Dendritic cell treated with granulocyte-macrophage colony-stimulating factor and Interleukin-4, amounts not matched to agents 40 ng/mL and 50 ng/mL, for 4 days (primary cell): ENCODE measurements at regions of chr6 and their contacts with region 1.

Region 1: GRCh38 chr6:4055420-4056041 is 23.4 kb downstream of the FAM217A start:
- H3K4me3 Mint-ChIP-seq: no peak overlapping the region
- H3K27ac Mint-ChIP-seq: no peak overlapping the region
- H3K4me1 Mint-ChIP-seq: no peaks in the 10 kb centered on the region
- H3K27me3 Mint-ChIP-seq: no peaks in the 10 kb centered on the region

Region 2: DNA sequence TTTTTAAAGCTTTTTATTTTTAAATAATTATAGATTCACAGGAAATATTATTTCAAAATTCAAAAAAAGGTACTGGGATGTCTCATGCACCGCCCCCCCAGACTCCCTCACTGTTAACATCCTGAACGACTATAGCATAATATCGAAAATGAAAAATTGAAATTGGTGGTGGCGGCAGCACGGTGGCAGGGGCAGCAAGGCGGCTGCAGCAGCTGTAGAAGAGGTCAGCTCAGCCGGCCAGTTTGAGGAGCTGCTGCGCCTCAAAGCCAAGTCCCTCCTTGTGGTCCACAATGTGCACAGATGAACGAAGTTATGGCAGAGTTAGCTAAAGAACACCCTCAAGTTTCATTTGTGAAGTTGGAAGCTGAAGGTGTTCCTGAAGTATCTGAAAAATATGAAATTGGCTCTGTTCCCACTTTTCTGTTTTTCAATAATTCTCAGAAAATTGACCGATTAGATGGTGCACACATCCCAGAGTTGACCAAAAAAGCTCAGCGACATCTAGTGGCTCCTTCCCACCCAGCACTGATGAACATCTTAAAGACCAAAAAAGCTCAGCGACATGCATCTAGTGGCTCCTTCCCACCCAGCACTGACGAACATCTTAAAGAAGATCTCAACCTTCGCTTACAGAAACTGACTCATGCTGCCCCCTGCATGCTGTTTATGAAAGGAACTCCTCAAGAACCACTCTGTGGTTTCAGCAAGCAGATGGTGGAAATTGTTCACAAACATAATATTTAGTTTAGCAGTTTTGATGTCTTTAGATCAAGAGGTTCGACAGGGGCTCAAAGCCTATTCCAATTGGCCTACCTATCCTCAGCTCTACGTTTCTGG is 77.4 kb before region 1 on chr6:
- intact Hi-C with region 1: no loop called
- H3K4me3 Mint-ChIP-seq: no peak overlapping the region
- H3K27ac Mint-ChIP-seq: no peak overlapping the region
- H3K4me1 Mint-ChIP-seq: no peaks in the 10 kb centered on the region
- H3K27me3 Mint-ChIP-seq: peaks cover 6% of the 10 kb centered on the region

Region 3: DNA sequence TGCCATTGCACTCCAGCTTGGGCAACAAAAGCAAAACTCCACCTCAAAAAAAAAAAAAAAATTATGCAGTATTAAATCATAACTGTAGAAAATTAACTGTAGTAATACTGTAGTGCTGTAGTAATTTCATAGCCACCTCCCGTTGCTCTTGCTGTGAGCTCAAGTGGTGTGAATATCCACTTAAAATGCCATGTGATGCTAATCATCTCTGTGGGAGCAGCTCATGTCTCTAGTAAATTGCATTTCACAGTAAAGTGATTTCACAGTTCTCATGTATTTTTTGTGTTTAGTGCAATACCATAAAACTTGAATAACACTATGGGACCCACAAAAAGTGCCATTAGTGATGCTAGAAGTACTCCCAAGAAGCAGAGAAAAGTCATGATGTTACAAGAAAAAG is 37.8 kb after region 1 on chr6:
- intact Hi-C with region 1: no loop called
- H3K4me3 Mint-ChIP-seq: no peak overlapping the region
- H3K27ac Mint-ChIP-seq: no peak overlapping the region
- H3K4me1 Mint-ChIP-seq: no peaks in the 10 kb centered on the region
- H3K27me3 Mint-ChIP-seq: no peaks in the 10 kb centered on the region

Region 4: GRCh38 chr6:4125936-4126864 is 70.7 kb after region 1 on chr6:
- intact Hi-C with region 1: loop called (anchors 10 kb)
- H3K4me3 Mint-ChIP-seq: no peak overlapping the region
- H3K27ac Mint-ChIP-seq: no peak overlapping the region
- H3K4me1 Mint-ChIP-seq: peaks cover 8% of the 10 kb centered on the region
- H3K27me3 Mint-ChIP-seq: no peaks in the 10 kb centered on the region

Region 5: DNA sequence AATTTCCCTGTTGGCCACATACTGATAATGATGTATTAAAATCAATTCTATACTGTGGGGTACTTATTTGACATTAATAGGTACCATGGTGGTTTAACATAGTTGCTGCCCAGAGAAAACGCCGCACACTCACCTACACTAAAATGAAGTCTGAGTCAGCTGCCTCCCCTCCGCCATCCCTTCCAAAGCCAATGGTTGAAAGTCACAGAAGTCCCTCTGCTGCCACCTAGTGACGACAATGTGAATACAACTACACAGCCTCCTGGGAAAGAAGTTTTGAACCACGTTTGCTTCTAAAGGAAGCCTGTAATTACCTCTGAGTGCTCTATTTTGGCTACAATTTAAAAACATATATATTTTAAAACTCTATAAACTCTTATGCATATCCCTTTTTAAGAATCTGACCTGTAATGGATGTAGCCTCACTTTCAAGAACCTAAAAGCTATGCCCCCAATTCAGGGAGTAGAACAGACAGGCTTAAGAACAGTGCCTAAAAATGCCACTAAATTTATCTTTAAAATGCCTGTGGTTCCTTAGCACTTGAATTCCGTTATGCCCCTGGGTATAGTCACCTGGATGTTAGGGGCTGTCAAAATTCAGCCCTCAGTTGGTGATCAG is 100.4 kb after region 1 on chr6:
- intact Hi-C with region 1: loop called (anchors 5 kb)
- H3K4me3 Mint-ChIP-seq: no peak overlapping the region
- H3K27ac Mint-ChIP-seq: no peak overlapping the region
- H3K4me1 Mint-ChIP-seq: peaks cover 4% of the 10 kb centered on the region
- H3K27me3 Mint-ChIP-seq: peaks cover 3% of the 10 kb centered on the region

Region 6: DNA sequence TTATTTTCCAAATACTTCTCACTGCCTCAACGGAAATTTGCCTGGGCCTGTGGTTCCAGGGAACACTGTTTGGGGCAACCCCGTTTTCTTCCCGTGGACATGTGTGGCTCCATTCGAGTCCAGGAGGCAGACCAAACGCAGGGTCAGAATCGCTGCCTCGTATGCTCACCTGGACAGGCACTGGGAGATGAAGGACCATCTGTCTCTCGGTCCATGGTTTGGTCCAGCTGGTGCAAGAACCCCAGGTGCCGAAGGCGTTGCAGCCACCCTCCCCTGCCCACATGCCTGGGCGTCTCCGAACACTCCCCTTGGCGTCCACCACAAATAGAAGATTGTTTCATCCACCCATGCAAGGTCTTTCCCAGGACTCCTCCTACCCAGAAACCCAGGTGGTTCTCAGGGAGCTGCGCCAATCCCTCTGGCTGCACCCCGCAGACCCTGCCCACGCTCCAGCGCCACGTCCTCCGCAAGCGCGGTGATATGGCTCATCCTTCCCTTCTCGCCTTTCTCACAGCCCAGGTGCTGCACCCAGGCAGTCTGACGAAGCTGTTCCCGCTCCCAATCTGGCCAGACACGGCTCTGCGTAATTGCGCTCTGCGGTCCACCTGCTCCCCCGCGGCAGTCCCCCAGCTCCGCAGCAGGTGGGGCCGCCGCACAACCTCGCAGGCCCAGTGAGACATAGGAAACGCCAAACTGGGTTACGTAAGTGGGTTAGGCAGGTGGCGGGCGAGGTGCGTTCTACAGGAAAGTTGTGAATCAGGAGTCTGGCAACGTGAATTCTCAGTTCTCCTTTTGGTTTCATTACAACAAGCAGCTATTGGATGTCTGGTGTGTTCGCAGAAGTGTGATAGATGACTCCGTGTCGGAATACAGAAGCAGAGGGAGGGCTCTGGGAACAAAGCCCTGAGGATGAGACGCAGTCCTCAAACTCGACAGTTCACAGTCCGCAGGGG is 226.1 kb after region 1 on chr6:
- intact Hi-C with region 1: no loop called
- H3K4me3 Mint-ChIP-seq: peak overlapping the region; percentile 53
- H3K27ac Mint-ChIP-seq: no peak overlapping the region
- H3K4me1 Mint-ChIP-seq: peaks cover 9% of the 10 kb centered on the region
- H3K27me3 Mint-ChIP-seq: peaks cover 44% of the 10 kb centered on the region

Region 7: GRCh38 chr6:4466778-4467452 is 411.4 kb after region 1 on chr6:
- intact Hi-C with region 1: no loop called
- H3K4me3 Mint-ChIP-seq: no peak overlapping the region
- H3K27ac Mint-ChIP-seq: no peak overlapping the region
- H3K4me1 Mint-ChIP-seq: no peaks in the 10 kb centered on the region
- H3K27me3 Mint-ChIP-seq: no peaks in the 10 kb centered on the region